ENCODE measurements at regions of chr2 and their contacts with region 1.

Region 1: DNA sequence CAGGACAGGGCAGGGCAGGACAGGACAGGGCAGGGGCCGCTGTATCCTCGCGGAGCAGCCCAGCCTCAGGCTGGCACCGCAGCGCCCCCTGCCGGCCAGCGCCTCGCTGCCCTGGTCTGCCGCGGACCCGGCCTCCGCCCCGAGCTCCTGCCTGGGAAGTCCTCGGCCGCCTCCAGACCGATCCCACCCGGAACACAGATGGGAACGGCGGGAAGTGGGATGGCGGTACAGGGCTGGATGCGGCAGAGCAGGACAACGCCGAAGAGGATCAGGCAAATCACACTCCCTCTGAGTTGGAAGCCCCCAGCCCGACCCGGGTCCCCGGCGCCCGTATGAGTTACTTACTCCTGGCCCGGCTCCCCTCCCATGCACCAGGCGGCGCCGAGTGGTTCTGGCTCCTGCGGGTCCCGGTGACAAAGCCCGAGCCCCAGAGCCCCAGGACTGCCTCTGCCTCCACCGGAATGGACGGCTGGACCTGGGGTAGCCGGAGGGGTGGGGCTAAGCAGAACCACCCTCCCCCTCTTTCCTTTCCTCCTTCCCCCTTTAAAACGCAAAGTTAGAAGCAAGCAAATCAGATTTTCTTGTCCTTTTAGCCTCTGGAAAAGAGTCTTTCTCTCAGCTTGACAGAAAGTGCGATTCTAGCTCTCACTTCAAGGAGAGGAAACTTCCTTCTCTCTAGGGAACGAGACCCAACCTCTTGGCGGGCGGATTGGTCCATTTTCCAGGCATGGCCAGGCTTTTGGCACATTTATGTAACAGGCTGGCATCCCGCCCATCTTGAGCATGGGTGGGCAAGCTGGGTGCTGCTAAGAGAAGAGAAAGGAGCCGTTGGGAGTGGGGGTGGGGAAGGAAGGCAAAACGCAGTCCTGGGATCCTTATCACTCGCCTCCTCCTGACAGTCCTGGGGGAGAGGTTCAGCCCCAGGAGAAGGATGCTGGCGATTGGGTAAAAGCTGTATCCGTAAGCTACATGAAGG is at the start of gene TP53I3:
- DNase-seq: peak; percentile 77
- H3K4me3 Mint-ChIP-seq: peak within 1 kb of the TSS; percentile 85
- H3K27ac Mint-ChIP-seq: peak within 1 kb of the TSS; percentile 75
- H3K4me1 Mint-ChIP-seq: peaks cover 18% of the 10 kb centered on the region
- H3K27me3 Mint-ChIP-seq: no peaks in the 10 kb centered on the region
- total RNA-seq, gene TP53I3: 0.70 and 0.96 TPM in 2 replicates

Region 2: DNA sequence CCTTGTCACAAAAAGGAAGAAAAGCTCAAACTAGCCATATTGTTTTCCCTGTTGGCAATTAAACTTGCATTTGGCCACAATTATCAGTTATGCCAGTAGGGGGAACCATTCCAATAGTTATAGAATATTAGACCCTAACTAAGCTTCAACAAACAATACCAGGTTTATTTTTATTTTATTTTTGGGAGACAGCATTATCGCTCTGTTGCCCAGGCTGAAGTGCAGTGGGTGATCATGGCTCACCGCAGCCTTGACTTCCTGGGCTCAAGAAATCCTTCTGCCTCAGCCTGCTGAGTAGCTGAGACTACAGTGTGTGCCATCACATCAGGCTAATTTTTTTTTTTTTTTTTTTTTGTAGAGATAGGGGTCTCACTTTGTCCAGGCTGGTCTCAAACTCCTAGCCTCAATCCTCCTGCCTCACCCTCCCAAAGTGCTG is 259.9 kb before region 1 on chr2:
- intact Hi-C with region 1: loop called (anchors 1 kb)
- DNase-seq: no peak
- H3K4me3 Mint-ChIP-seq: no peak overlapping the region
- H3K27ac Mint-ChIP-seq: no peak overlapping the region
- H3K4me1 Mint-ChIP-seq: no peaks in the 10 kb centered on the region
- H3K27me3 Mint-ChIP-seq: no peaks in the 10 kb centered on the region

Region 3: DNA sequence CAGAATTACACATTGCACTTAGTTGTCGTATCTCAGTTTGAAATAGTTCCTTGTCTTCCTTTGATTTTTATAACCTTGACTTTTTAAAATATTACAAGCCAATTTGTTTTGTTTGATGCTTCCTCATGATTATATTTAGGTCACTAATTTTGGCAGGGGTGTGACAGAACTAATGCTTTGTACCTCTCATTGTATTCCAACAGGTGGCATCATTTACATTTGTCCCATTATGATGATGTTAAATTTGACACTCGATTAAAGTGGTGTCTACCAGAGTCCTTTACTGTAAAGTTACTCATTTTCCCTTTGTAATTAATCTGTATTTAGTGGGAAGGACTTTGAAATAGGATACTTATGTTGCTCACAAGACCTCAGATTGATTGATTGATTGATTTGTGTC is 96.3 kb before region 1 on chr2:
- intact Hi-C with region 1: loop called (anchors 1 kb)
- DNase-seq: no peak
- H3K4me3 Mint-ChIP-seq: no peak overlapping the region
- H3K27ac Mint-ChIP-seq: no peak overlapping the region
- H3K4me1 Mint-ChIP-seq: no peaks in the 10 kb centered on the region
- H3K27me3 Mint-ChIP-seq: no peaks in the 10 kb centered on the region

Region 4: DNA sequence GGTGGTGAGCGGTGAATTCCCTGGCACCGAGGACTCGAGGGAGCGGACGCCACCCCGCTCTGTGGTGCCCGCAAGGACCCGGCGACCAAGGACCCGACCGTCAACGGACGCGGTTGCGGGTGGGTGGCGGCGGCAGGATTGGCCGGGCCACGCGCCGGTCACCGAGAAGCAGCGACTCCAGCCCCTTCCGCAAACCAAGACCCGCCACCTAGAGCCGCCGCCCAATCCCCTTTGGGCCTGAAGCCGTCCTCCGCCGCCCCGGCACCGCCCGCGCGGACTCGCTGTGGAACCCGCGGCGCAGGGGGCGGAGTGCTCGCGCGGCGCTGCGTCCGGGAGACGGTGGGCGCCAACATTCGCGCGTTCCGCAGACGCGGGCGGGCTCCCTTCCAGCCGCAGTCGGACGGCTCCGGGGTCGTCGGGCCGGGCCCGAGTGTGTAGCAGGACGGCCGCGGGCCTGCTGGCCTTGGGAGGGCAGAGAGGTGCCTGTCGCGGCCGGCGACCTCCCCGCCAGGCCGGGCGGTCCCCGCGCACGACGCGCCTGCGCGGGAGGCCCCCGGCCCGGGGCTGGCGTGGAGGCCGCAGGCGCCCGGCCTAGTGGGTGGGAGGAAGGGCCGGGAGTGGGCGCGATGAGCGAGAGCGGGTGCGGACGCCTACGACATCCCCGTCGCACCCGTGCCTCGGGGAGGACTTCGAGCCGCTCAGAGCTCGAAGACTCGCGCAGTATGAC is 38.7 kb after region 1 on chr2 and contains the starts of genes FAM228B and PFN4:
- intact Hi-C with region 1: loop called (anchors 1 kb)
- DNase-seq: peak; percentile 66
- H3K4me3 Mint-ChIP-seq: peak within 1 kb of the TSS; percentile 85
- H3K27ac Mint-ChIP-seq: peak within 1 kb of the TSS; percentile 86
- H3K4me1 Mint-ChIP-seq: peaks cover 15% of the 10 kb centered on the region
- H3K27me3 Mint-ChIP-seq: no peaks in the 10 kb centered on the region
- total RNA-seq, gene FAM228B: 3.1 and 4.8 TPM in 2 replicates
- total RNA-seq, gene PFN4: not detected in 2 replicates